CD8-positive, alpha-beta T cell (primary cell): ENCODE measurements at regions of chr2 and their contacts with region 1.

Region 1: GRCh38 chr2:176001916-176002687 is at the start of gene LNPK:
- DNase-seq: peak; percentile 84 to 95 (median 92)
- ATAC-seq: peak; percentile 88
- H3K4me3 ChIP-seq: peak within 1 kb of the TSS; percentile 69 to 79
- H3K4me3 Mint-ChIP-seq: peak within 1 kb of the TSS; percentile 90
- H3K27ac ChIP-seq: peak within 1 kb of the TSS; percentile 63 to 71
- H3K27ac Mint-ChIP-seq: peak within 1 kb of the TSS; percentile 97
- H3K4me1 ChIP-seq: peaks cover 10% of the 10 kb centered on the region
- H3K4me1 Mint-ChIP-seq: peaks cover 31% of the 10 kb centered on the region
- H3K27me3 ChIP-seq: no peaks in the 10 kb centered on the region
- H3K27me3 Mint-ChIP-seq: no peaks in the 10 kb centered on the region
- CTCF ChIP-seq: no peak
- total RNA-seq, gene LNPK: 16.9 TPM

Region 2: GRCh38 chr2:174395284-174395968 is 1606.7 kb before region 1 on chr2 and contains the start of gene SCRN3:
- CTCF ChIA-PET with region 1: no interaction called
- POLR2A ChIA-PET with region 1: no interaction called
- intact Hi-C with region 1: loop called in 1 of 2 experiments (anchors 5 kb)
- DNase-seq: peak; percentile 55 to 92 (median 79)
- ATAC-seq: peak; percentile 90
- H3K4me3 ChIP-seq: peak within 1 kb of the TSS; percentile 78 to 91
- H3K4me3 Mint-ChIP-seq: peak within 1 kb of the TSS; percentile 98
- H3K27ac ChIP-seq: peak within 1 kb of the TSS; percentile 93 to 97
- H3K27ac Mint-ChIP-seq: peak within 1 kb of the TSS; percentile 100
- H3K4me1 ChIP-seq: peaks cover 29% of the 10 kb centered on the region
- H3K4me1 Mint-ChIP-seq: peaks cover 55% of the 10 kb centered on the region
- H3K27me3 ChIP-seq: no peaks in the 10 kb centered on the region
- H3K27me3 Mint-ChIP-seq: no peaks in the 10 kb centered on the region
- CTCF ChIP-seq: no peak
- total RNA-seq, gene SCRN3: 5.9 to 7.3 TPM

Region 3: GRCh38 chr2:175167792-175168563 is 834.1 kb before region 1 on chr2 and contains the start of gene ATF2:
- CTCF ChIA-PET with region 1: no interaction called
- POLR2A ChIA-PET with region 1: no interaction called
- intact Hi-C with region 1: loop called in 1 of 2 experiments (anchors 2 kb)
- DNase-seq: peak; percentile 94 to 100 (median 96)
- ATAC-seq: peak; percentile 91
- H3K4me3 ChIP-seq: peak within 1 kb of the TSS; percentile 95 to 99
- H3K4me3 Mint-ChIP-seq: peak within 1 kb of the TSS; percentile 100
- H3K27ac ChIP-seq: peak within 1 kb of the TSS; percentile 87 to 92
- H3K27ac Mint-ChIP-seq: peak within 1 kb of the TSS; percentile 99
- H3K4me1 ChIP-seq: peaks cover 19% of the 10 kb centered on the region
- H3K4me1 Mint-ChIP-seq: peaks cover 48% of the 10 kb centered on the region
- H3K27me3 ChIP-seq: no peaks in the 10 kb centered on the region
- H3K27me3 Mint-ChIP-seq: no peaks in the 10 kb centered on the region
- CTCF ChIP-seq: no peak
- total RNA-seq, gene ATF2: 42.9 to 43.6 TPM

Region 4: GRCh38 chr2:175984846-175985245 is 17.3 kb before region 1 on chr2:
- CTCF ChIA-PET with region 1: no interaction called
- POLR2A ChIA-PET with region 1: no interaction called
- intact Hi-C with region 1: no loop called
- DNase-seq: no peak
- ATAC-seq: no peak
- H3K4me3 ChIP-seq: no peak overlapping the region
- H3K4me3 Mint-ChIP-seq: no peak overlapping the region
- H3K27ac ChIP-seq: no peak overlapping the region
- H3K27ac Mint-ChIP-seq: no peak overlapping the region
- H3K4me1 ChIP-seq: no peaks in the 10 kb centered on the region
- H3K4me1 Mint-ChIP-seq: no peaks in the 10 kb centered on the region
- H3K27me3 ChIP-seq: no peaks in the 10 kb centered on the region
- H3K27me3 Mint-ChIP-seq: no peaks in the 10 kb centered on the region
- CTCF ChIP-seq: no peak

Region 5: DNA sequence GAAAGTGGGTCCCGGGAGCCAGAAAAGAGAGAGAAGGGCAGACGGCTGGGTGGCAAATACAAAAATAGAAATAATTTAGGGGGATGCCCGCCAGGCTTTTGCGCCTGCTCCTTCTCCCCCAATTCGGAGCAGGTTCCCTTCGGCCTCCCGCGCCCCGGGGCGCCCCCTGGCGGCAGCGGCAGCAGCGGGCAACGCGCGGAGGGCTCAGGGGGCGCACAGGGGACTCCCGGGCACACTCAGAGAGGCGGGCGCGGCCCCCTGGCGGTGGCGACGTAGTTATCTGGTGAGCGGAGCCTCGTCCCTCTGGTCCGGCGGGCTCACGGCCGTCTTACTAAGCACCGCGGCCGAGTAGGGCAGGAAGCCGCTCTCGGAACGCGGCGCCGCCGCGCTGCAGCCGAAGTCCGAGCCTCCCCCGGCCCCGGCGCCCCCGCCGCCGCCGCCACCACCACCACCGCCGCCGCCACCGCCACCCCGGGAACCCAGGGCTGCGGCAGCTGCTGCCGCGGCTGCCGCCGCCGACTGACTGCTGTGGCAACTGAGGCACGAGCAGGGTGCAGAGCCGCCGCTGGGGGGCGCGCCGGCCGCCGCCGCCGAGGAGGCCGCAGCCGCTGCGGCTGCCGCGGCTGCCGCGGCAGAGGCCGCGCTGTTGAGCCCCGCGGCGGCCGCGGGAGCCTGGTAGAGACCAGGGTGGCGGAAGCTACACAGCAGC is 77.9 kb after region 1 on chr2:
- CTCF ChIA-PET with region 1: no interaction called
- POLR2A ChIA-PET with region 1: no interaction called
- intact Hi-C with region 1: loop called (anchors 5 kb)
- DNase-seq: peak in 2 of 9 experiments; percentile 29 to 43
- ATAC-seq: peak; percentile 31
- H3K4me3 ChIP-seq: no peak overlapping the region
- H3K4me3 Mint-ChIP-seq: peak overlapping the region; percentile 51
- H3K27ac ChIP-seq: no peak overlapping the region
- H3K27ac Mint-ChIP-seq: no peak overlapping the region
- H3K4me1 ChIP-seq: peaks cover 11% of the 10 kb centered on the region
- H3K4me1 Mint-ChIP-seq: peaks cover 12% of the 10 kb centered on the region
- H3K27me3 ChIP-seq: peaks cover 77 to 85% of the 10 kb centered on the region in 2 experiments
- H3K27me3 Mint-ChIP-seq: peaks cover 83% of the 10 kb centered on the region
- CTCF ChIP-seq: no peak

Region 6: DNA sequence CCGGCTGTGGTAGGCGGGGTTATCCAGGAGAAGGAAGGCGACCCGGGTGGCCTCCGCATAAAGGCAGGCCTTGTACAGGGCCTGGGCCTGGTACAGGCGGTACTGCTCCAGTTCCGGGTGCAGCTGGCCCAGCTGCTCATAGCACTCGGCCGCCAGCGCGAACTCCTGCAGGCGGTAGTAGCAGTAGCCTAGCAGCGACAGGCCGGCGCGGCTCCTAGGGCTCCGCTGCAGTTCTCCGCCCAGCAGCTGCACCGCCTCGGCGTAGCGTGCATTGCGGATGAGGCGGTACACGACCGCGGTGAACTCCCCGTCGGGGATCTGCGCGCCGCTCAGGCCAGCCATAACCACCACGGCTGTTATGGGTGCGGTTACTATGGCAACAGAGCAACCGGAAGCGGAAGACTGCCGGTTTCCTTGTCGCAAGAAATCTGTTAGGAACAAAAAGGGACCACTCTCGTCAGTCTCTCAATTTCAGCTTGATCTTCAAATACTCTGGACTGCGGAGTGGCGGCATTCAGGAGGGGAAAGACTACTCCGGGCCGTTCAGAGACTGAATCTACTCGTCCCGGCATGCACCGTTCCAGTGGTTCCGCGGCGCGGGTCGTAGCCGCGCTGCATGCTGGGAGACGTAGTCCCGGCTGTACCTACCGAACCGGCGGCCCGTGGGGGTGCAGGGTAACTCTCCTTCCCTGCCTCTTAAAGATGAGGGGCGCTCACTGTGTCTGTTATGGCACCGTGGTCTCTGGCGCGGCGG is 1550.5 kb after region 1 on chr2:
- CTCF ChIA-PET with region 1: no interaction called
- POLR2A ChIA-PET with region 1: no interaction called
- intact Hi-C with region 1: loop called (anchors 1 to 5 kb)
- DNase-seq: peak; percentile 83 to 97 (median 91)
- ATAC-seq: peak; percentile 89
- H3K4me3 ChIP-seq: peak overlapping the region; percentile 85 to 99
- H3K4me3 Mint-ChIP-seq: peak overlapping the region; percentile 96
- H3K27ac ChIP-seq: peak overlapping the region; percentile 98 to 100
- H3K27ac Mint-ChIP-seq: peak overlapping the region; percentile 99
- H3K4me1 ChIP-seq: peaks cover 6% of the 10 kb centered on the region
- H3K4me1 Mint-ChIP-seq: peaks cover 12% of the 10 kb centered on the region
- H3K27me3 ChIP-seq: peaks cover 0 to 2% of the 10 kb centered on the region in 2 experiments
- H3K27me3 Mint-ChIP-seq: no peaks in the 10 kb centered on the region
- CTCF ChIP-seq: no peak